ENCODE measurements at regions of chr7 and their contacts with region 1.

Region 1: DNA sequence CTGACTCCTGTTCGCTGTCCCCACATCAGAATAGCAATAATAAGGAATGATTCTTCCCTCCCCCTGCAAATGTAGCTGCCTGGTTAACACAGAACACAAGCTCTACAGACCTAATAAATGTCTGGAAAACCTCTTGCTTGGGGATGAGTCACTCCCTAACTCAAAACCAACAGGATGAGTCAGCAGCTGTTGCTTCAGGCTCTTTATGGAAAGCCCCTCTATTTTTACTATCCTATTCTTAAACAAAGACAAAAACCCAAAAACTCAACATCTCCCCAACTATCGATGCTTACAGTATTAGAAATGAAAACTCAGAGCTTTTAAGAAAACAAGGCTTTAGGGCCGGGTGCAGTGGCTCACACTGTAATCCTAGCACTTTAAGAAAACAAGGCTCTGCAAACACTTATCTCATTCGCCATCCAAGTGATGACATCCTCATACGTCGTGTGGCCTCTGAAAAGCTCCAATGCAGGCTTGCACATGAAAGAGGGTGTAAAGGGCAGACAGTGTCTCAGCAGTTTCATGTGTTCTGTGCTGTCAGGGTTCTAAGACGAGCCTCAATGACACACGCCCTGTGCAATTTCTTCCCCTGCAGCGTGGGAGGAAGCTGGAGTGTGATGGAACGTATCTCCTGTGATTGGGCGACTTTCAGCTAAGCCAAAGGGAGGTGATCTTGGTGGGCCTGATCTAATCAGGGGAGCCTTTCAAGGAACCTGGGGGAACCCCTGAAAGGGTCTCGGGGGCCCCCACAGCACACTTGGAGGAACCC is 70.1 kb downstream of the AMZ1 start:
- DNase-seq: peak in 1 of 2 donors; percentile 83
- H3K4me3 ChIP-seq: peak overlapping the region in 1 of 2 donors; percentile 31
- H3K27ac ChIP-seq: peak overlapping the region; percentile 79 to 80
- H3K4me1 ChIP-seq: peaks cover 29 to 40% of the 10 kb centered on the region in 2 donors
- H3K27me3 ChIP-seq: no peaks in the 10 kb centered on the region
- CTCF ChIP-seq: no peak

Region 2: GRCh38 chr7:2796358-2797352 is 38.6 kb after region 1 on chr7:
- intact Hi-C with region 1: loop called (anchors 2 kb)
- DNase-seq: peak in 1 of 2 donors; percentile 90
- H3K4me3 ChIP-seq: peak overlapping the region in 1 of 2 donors; percentile 37
- H3K27ac ChIP-seq: peak overlapping the region; percentile 64 to 72
- H3K4me1 ChIP-seq: peaks cover 0 to 13% of the 10 kb centered on the region in 2 donors
- H3K27me3 ChIP-seq: no peaks in the 10 kb centered on the region
- CTCF ChIP-seq: no peak

Region 3: GRCh38 chr7:2811476-2812113 is 53.5 kb after region 1 on chr7:
- intact Hi-C with region 1: loop called (anchors 5 kb)
- DNase-seq: no peak
- H3K4me3 ChIP-seq: peak overlapping the region; percentile 22 to 57
- H3K27ac ChIP-seq: peak overlapping the region; percentile 59 to 76
- H3K4me1 ChIP-seq: peaks cover 3 to 12% of the 10 kb centered on the region in 2 donors
- H3K27me3 ChIP-seq: no peaks in the 10 kb centered on the region
- CTCF ChIP-seq: no peak

Region 4: DNA sequence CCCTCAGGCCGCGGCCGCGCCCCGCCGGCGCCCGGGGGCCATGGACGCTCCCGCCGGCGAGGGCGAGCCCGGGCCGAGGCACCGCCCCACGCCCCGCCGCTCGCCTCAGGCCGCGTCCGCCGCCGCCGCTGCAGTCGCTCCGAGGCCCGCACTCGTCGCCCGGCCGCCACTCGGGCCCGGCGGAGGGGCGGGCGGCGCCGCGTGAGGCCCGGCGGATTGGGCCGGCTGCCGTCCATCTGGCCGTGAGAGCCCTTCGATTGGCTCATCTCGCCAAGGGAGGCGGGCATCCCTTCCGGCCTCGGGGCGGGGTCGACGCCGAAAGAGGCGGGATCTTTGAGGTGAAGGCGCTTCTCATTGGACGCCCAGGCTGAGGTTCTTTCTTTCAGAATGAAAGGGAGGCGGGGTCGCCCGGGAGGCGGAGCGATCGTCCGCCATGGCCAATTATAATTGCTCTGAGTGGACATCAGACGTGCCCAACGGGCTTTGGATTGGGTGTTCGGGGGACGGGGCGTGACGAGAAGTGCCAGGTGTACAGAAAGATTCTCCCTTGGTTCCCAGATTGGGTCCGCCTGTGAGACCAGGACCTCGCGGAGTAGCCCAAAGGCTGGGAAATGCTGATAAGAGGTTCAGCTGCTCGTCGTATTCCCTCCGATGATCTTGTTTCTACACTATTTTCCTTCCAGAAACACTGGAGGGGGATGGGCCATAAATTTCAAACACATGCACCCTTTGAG is 86.2 kb after region 1 on chr7 and contains the start of gene GNA12:
- intact Hi-C with region 1: loop called (anchors 1 kb)
- DNase-seq: peak; percentile 97 to 100
- H3K4me3 ChIP-seq: peak within 1 kb of the TSS; percentile 90 to 94
- H3K27ac ChIP-seq: peak within 1 kb of the TSS; percentile 57 to 62
- H3K4me1 ChIP-seq: peaks cover 9 to 18% of the 10 kb centered on the region in 2 donors
- H3K27me3 ChIP-seq: no peaks in the 10 kb centered on the region
- CTCF ChIP-seq: no peak
- total RNA-seq, gene GNA12: 61.0 TPM